B cell (primary cell): ENCODE measurements at regions of chr7 and their contacts with region 1.

Region 1: DNA sequence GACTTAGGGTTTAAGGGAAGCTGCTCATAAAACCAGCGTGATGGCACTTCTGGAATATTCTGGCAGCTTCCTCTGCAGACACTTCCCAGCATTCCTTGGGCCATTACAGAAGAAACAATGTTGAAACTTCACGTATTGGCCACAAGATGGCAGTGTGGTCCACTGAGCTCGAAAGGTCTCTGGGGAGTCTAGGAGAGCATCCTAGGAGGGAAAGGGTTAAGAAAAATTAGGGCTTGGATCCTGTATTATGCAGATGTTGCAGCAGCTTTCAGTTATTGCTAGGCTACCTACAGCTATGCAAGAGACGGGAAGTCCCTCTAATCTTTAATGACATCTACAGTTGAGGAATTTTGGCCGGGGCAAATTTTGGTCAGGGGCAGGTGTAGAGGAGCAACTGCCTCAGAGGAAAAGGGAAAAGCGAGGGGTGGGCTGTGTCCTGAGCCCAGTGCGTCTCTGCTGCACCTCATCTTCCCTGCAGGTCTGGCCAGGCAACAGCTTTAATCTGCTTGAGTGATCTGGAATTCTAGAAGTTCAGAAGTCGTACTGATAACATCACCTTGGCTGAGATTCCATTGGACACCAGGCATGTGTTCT is 220.7 kb upstream of the PRSS58 start:
- DNase-seq: peak; percentile 47
- ATAC-seq: peak; percentile 43
- H3K4me3 ChIP-seq: no peak overlapping the region
- H3K4me3 Mint-ChIP-seq: no peak overlapping the region
- H3K27ac ChIP-seq: no peak overlapping the region
- H3K27ac Mint-ChIP-seq: no peak overlapping the region
- H3K4me1 ChIP-seq: peaks cover 5 to 14% of the 10 kb centered on the region in 2 donors
- H3K4me1 Mint-ChIP-seq: peaks cover 14% of the 10 kb centered on the region
- H3K27me3 ChIP-seq: peaks cover 0 to 2% (median 0%) of the 10 kb centered on the region in 4 experiments
- H3K27me3 Mint-ChIP-seq: peaks cover 6% of the 10 kb centered on the region
- CTCF ChIP-seq: peak; percentile 67

Region 2: GRCh38 chr7:142459551-142459963 is 19.0 kb before region 1 on chr7:
- CTCF ChIA-PET with region 1: interaction called, 12 read pairs
- POLR2A ChIA-PET with region 1: no interaction called
- intact Hi-C with region 1: loop called (anchors 1 kb)
- DNase-seq: peak; percentile 51
- ATAC-seq: peak; percentile 43
- H3K4me3 ChIP-seq: no peak overlapping the region
- H3K4me3 Mint-ChIP-seq: no peak overlapping the region
- H3K27ac ChIP-seq: no peak overlapping the region
- H3K27ac Mint-ChIP-seq: no peak overlapping the region
- H3K4me1 ChIP-seq: peaks cover 0 to 4% of the 10 kb centered on the region in 2 donors
- H3K4me1 Mint-ChIP-seq: no peaks in the 10 kb centered on the region
- H3K27me3 ChIP-seq: peaks cover 0 to 4% (median 2%) of the 10 kb centered on the region in 4 experiments
- H3K27me3 Mint-ChIP-seq: peaks cover 25% of the 10 kb centered on the region
- CTCF ChIP-seq: peak; percentile 78

Region 3: DNA sequence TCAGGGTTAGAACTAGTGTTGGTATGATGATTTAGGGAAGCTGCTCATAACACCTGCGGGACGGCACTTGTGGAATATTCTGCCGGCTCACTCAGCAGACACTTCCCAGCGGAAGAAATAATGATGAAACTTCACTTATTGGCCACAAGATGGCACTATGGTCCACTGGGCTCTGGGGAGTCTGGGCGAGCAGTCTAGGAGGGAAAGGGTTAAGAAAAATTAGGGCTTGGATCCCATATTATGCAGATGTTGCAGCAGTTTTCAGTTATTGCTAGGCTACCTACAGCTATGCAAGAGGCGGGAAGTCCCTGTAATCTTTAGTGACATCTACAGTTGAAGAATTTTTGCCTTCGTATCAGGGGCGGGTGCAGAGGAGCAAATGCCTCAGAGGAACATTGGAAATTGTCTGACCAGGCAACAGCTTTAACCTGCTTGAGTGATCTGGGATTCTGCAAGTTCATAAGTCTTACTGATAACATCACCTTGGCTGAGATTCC is 18.0 kb after region 1 on chr7:
- CTCF ChIA-PET with region 1: interaction called, 14 read pairs
- POLR2A ChIA-PET with region 1: no interaction called
- intact Hi-C with region 1: no loop called
- DNase-seq: peak; percentile 41
- ATAC-seq: no peak
- H3K4me3 ChIP-seq: no peak overlapping the region
- H3K4me3 Mint-ChIP-seq: no peak overlapping the region
- H3K27ac ChIP-seq: no peak overlapping the region
- H3K27ac Mint-ChIP-seq: no peak overlapping the region
- H3K4me1 ChIP-seq: no peaks in the 10 kb centered on the region
- H3K4me1 Mint-ChIP-seq: peaks cover 7% of the 10 kb centered on the region
- H3K27me3 ChIP-seq: peaks cover 0 to 10% (median 3%) of the 10 kb centered on the region in 4 experiments
- H3K27me3 Mint-ChIP-seq: peaks cover 30% of the 10 kb centered on the region
- CTCF ChIP-seq: peak; percentile 75